ENCODE measurements at regions of chr1 and their contacts with region 1.

Region 1: DNA sequence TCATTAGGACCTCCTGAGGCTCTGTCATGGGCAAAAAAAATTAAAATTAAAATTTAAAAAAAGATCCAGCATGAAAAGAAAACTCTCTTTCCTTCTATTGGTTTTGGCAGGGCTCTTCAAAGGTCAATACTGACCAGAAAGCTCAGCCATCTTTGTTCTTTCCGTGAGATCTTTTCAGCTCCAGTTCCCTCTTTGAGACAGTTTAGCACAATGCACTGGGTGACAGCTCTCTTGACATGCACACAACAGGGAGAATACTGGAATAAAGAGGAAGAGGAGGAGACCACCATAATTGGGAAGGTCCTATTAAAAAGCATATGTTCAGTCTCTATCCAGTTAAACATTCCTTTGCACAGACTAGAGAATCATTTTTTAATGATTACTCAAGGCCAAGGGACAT is 6.3 kb downstream of the LIX1L start:
- DNase-seq: no peak
- ATAC-seq: no peak
- H3K4me3 ChIP-seq: no peak overlapping the region
- H3K4me3 Mint-ChIP-seq: no peak overlapping the region
- H3K27ac ChIP-seq: no peak overlapping the region
- H3K27ac Mint-ChIP-seq: no peak overlapping the region
- H3K4me1 ChIP-seq: peaks cover 39% of the 10 kb centered on the region
- H3K4me1 Mint-ChIP-seq: peaks cover 70% of the 10 kb centered on the region
- H3K27me3 ChIP-seq: no peaks in the 10 kb centered on the region
- H3K27me3 Mint-ChIP-seq: no peaks in the 10 kb centered on the region
- CTCF ChIP-seq: no peak

Region 2: DNA sequence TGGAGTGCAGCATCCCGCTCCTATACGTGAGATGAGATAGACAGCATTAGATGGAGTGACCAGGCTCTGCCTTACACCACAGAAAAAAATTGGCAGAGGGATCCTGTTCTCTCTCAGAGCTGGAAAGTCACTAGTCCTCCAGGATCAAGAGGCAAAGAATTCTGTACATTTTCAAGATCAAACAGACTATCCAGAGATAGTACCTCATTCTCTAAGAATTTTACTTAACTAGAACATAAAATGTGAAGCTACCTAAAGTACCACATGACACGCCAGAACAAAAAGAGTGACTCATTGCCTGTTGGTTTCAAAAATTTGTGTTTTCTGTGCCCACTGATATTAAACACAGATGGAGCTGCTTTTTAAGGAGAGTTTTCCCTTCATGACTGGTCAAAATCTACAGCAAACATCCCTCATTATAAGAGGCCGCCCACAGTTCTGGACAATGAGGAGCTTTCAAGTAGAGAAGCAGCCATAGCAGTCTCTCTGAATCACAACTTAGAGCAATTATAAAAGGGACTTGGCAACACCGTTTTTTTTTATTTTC is 200.0 kb before region 1 on chr1:
- CTCF ChIA-PET with region 1: no interaction called
- POLR2A ChIA-PET with region 1: no interaction called
- intact Hi-C with region 1: no loop called
- DNase-seq: no peak
- ATAC-seq: no peak
- H3K4me3 ChIP-seq: no peak overlapping the region
- H3K4me3 Mint-ChIP-seq: no peak overlapping the region
- H3K27ac ChIP-seq: no peak overlapping the region
- H3K27ac Mint-ChIP-seq: no peak overlapping the region
- H3K4me1 ChIP-seq: no peaks in the 10 kb centered on the region
- H3K4me1 Mint-ChIP-seq: no peaks in the 10 kb centered on the region
- H3K27me3 ChIP-seq: no peaks in the 10 kb centered on the region
- H3K27me3 Mint-ChIP-seq: no peaks in the 10 kb centered on the region
- CTCF ChIP-seq: no peak

Region 3: DNA sequence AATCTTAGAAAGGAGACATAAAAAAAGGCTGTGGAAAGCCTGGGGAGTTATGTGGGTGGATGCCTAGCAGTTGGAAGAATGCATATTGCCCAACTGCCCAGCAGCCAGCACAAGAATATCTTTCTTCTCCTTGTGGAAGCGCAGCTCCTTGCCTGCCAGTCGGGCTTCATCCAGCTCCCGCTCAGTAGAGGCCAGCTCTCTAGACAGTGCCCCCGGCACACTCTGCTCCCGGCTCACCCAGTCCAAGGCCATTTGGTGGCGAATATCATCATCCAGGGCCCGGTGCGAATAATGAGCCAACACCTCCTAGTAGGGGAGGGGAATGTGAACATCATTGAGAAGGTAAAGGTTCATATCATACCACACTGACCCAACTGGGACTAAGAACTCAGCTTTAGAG is 15.3 kb before region 1 on chr1:
- CTCF ChIA-PET with region 1: no interaction called
- POLR2A ChIA-PET with region 1: interaction called, 3 read pairs
- intact Hi-C with region 1: loop called in 1 of 2 experiments (anchors 2 kb)
- DNase-seq: no peak
- ATAC-seq: no peak
- H3K4me3 ChIP-seq: no peak overlapping the region
- H3K4me3 Mint-ChIP-seq: no peak overlapping the region
- H3K27ac ChIP-seq: no peak overlapping the region
- H3K27ac Mint-ChIP-seq: no peak overlapping the region
- H3K4me1 ChIP-seq: peaks cover 15% of the 10 kb centered on the region
- H3K4me1 Mint-ChIP-seq: peaks cover 16% of the 10 kb centered on the region
- H3K27me3 ChIP-seq: no peaks in the 10 kb centered on the region
- H3K27me3 Mint-ChIP-seq: no peaks in the 10 kb centered on the region
- CTCF ChIP-seq: no peak